Right cardiac atrium (tissue), 5 donors: ENCODE measurements at regions of chr6 and their contacts with region 1.

Region 1: GRCh38 chr6:52020945-52021570 is 66.4 kb downstream of the PKHD1 start:
- DNase-seq: no peak
- ATAC-seq: no peak
- H3K4me3 ChIP-seq: no peak overlapping the region
- H3K27ac ChIP-seq: no peak overlapping the region
- H3K4me1 ChIP-seq: no peaks in the 10 kb centered on the region
- H3K27me3 ChIP-seq: no peaks in the 10 kb centered on the region

Region 2: DNA sequence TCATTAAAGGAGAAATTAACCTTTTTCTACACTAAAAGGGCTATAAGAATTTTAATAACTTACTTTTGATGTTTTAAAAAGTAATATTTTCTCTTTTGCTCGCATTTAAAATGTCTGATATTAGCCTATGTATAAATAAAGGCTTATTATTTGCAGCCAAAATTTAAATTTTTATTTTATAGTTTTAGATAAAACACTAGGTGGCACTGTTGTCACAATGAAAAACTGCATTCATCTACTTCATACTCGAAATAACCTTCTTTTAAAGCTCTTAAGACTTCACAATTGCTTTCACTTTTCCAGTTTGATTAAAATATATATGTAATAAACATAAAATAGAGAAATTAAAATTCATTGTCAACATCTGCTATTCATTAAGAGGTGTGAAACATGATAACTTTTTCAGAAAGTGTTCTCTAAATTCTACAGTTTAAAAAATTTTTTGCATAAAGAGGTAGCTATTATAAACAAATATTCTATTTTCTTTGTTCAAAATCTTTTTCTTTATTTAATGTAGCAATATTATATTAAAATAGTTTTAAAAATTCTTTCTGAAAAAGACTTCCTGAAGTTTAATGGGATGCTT is 1892.5 kb before region 1 on chr6:
- intact Hi-C with region 1: loop called in 1 of 4 experiments (anchors 10 kb)
- DNase-seq: no peak
- ATAC-seq: no peak
- H3K4me3 ChIP-seq: no peak overlapping the region
- H3K27ac ChIP-seq: no peak overlapping the region
- H3K4me1 ChIP-seq: no peaks in the 10 kb centered on the region
- H3K27me3 ChIP-seq: no peaks in the 10 kb centered on the region

Region 3: DNA sequence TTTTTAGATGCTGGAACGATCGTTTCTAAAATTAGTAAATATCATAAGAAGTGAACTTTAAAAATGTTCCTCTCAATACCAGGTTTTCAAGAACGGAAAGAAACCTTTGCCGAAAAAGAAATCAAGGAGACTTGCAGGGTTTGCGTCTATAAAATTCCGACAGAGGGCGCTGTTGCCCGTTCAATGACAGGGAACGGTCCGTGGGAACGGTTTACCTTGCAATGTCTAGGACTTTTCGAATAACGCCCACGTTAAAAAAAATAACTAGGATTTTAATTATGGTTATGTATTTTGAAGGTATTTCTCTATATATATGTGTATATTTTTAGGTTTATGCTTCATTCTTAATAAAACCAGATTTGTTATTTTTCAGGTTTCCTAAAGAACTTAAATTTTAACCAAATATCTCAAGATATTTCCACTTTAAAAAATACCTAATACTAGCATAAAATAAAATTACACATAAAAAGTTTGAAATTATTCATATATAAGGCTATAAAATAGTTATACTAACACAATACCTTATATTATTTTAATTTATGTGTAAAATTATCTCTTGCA is 1204.9 kb before region 1 on chr6:
- intact Hi-C with region 1: loop called in 3 of 4 experiments (anchors 10 kb)
- DNase-seq: peak; percentile 54 to 68 (median 58)
- ATAC-seq: peak in 1 of 2 donors; percentile 47
- H3K4me3 ChIP-seq: peak overlapping the region; percentile 77
- H3K27ac ChIP-seq: no peak overlapping the region
- H3K4me1 ChIP-seq: no peaks in the 10 kb centered on the region
- H3K27me3 ChIP-seq: peaks cover 7% of the 10 kb centered on the region

Region 4: GRCh38 chr6:51855310-51856082 is 165.6 kb before region 1 on chr6:
- intact Hi-C with region 1: loop called in 1 of 4 experiments (anchors 10 kb)
- DNase-seq: no peak
- ATAC-seq: no peak
- H3K4me3 ChIP-seq: no peak overlapping the region
- H3K27ac ChIP-seq: no peak overlapping the region
- H3K4me1 ChIP-seq: no peaks in the 10 kb centered on the region
- H3K27me3 ChIP-seq: no peaks in the 10 kb centered on the region